ENCODE measurements at regions of chr12 and their contacts with region 1.

Region 1: GRCh38 chr12:510071-510825 is 50.5 kb downstream of the B4GALNT3 start:
- DNase-seq: peak; percentile 10 to 83
- H3K4me3 ChIP-seq: no peak overlapping the region
- H3K27ac ChIP-seq: 0 out of 2 replicates have a peak overlapping the region, but pooled peaks have one; percentile 35
- H3K4me1 ChIP-seq: peaks cover 47% of the 10 kb centered on the region
- H3K27me3 ChIP-seq: no peaks in the 10 kb centered on the region
- CTCF ChIP-seq: no peak

Region 2: GRCh38 chr12:558580-558979 is 48.3 kb after region 1 on chr12:
- CTCF ChIA-PET with region 1: interaction called, 10 read pairs
- POLR2A ChIA-PET with region 1: no interaction called
- intact Hi-C with region 1: no loop called
- DNase-seq: peak in 1 of 2 experiments; percentile 43
- H3K4me3 ChIP-seq: no peak overlapping the region
- H3K27ac ChIP-seq: no peak overlapping the region
- H3K4me1 ChIP-seq: peaks cover 5% of the 10 kb centered on the region; the same call in 1 of the 2 replicates
- H3K27me3 ChIP-seq: peaks cover 14% of the 10 kb centered on the region; the same call in 1 of the 2 replicates
- CTCF ChIP-seq: no peak

Region 3: GRCh38 chr12:1021886-1022619 is 511.8 kb after region 1 on chr12:
- CTCF ChIA-PET with region 1: no interaction called
- POLR2A ChIA-PET with region 1: interaction called, 12 read pairs
- intact Hi-C with region 1: no loop called
- DNase-seq: no peak
- H3K4me3 ChIP-seq: no peak overlapping the region
- H3K27ac ChIP-seq: no peak overlapping the region
- H3K4me1 ChIP-seq: no peaks in the 10 kb centered on the region
- H3K27me3 ChIP-seq: no peaks in the 10 kb centered on the region
- CTCF ChIP-seq: no peak

Measured in PC-9 (cell line).